Mammary epithelial cell (primary cell): ENCODE measurements at regions of chr16 and their contacts with region 1.

Region 1: DNA sequence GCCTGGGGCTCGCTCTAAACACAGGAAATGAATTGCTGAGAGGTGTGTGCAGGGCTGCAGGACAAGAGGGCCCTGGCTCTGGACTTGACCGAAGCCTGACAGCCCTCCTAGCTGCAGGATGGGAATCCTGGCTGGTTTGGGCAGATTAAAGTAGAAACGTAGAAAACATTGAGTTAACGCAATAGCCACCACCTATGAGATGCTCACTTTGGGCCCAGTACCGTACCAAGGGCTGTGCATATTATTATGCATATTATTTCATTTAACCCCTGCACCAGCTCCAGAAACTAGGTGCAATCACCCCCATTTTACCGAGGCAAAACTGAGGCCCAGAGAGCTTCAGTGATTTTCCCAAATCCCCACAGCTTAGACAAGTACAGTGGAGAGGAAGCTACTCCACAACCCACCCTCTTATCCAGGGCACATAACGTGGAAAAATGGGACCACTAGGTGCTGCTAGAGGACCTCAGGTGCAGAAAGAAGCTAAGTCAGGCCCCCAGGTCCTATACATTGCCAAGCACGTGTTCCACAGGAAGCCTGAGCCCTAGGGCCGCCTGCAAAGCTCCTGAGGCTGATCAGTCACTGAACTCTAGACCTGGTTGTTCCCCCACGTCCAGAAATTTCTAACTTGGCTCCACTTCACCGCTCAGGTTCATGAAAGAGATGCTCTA is 79.2 kb downstream of the MYH11 start:
- DNase-seq: peak; percentile 19
- H3K4me3 ChIP-seq: no peak overlapping the region
- H3K27ac ChIP-seq: no peak overlapping the region
- H3K4me1 ChIP-seq: no peaks in the 10 kb centered on the region
- H3K27me3 ChIP-seq: no peaks in the 10 kb centered on the region
- CTCF ChIP-seq: peak; percentile 43 to 61

Region 2: GRCh38 chr16:15835136-15835878 is 57.6 kb after region 1 on chr16:
- CTCF ChIA-PET with region 1: no interaction called
- dilution Hi-C with region 1: no loop called
- in situ Hi-C with region 1: loop called in 1 of 2 experiments (anchors 10 kb)
- intact Hi-C with region 1: no loop called
- DNase-seq: no peak
- H3K4me3 ChIP-seq: no peak overlapping the region
- H3K27ac ChIP-seq: no peak overlapping the region
- H3K4me1 ChIP-seq: no peaks in the 10 kb centered on the region
- H3K27me3 ChIP-seq: no peaks in the 10 kb centered on the region
- CTCF ChIP-seq: no peak

Region 3: GRCh38 chr16:16183562-16183961 is 405.9 kb after region 1 on chr16:
- CTCF ChIA-PET with region 1: no interaction called
- dilution Hi-C with region 1: no loop called
- in situ Hi-C with region 1: loop called in 1 of 2 experiments (anchors 10 kb)
- intact Hi-C with region 1: no loop called
- DNase-seq: no peak
- H3K4me3 ChIP-seq: no peak overlapping the region
- H3K27ac ChIP-seq: no peak overlapping the region
- H3K4me1 ChIP-seq: no peaks in the 10 kb centered on the region
- H3K27me3 ChIP-seq: no peaks in the 10 kb centered on the region
- CTCF ChIP-seq: no peak